ENCODE measurements at regions of chr18 and their contacts with region 1.

Region 1: DNA sequence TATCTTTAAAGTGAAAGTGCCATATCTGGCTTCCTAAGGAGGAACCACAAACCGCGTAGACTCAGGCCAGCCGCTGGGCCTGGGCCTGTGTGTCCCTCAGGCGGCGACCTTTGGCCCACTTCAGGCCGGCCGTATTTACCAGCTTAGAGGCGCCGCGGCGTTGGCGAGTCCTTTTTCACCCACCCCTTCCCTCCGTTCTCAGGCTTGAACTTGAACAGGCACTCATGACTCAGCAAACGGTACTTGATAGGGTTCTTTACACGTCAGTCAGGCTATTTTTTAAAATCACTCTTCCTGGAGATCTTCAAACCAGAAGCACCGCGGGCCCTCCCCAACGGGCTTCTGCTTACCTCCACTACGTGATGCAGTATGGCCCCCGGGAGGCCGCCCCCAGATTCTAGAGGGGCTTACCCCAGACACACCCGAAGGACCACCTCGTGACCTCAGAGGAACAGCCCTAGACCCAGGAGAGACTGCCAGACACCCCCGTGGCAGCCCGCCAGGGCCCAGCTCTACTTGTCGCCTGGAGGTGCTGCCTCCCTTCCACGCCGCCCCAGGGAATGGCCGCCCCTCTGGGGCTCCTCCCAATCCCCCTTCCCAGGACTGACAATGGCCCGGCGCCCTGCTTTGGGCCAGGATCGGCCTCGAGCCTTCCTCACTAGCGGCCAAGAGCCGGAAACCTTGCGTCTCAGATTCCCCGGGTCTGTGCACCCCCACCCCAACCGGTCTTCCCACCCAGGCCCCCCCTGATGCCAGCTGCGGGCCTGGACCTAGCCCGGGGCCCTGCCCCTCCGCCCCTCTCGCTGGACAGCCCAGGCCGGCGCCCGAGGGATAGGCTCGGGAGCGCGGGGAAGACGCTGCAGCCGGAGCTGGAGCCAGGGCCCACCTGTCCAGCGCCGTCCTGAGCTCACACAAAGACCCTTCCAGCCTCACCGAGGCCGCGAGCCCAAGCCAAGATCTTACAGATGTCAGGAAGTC is 33.8 kb upstream of the IMPA2 start:
- DNase-seq: peak; percentile 80 to 98
- H3K4me3 ChIP-seq: peak overlapping the region; percentile 64 to 66
- H3K27ac ChIP-seq: peak overlapping the region; percentile 84 to 99
- H3K4me1 ChIP-seq: peaks cover 3 to 14% of the 10 kb centered on the region in 2 donors
- H3K27me3 ChIP-seq: no peaks in the 10 kb centered on the region
- CTCF ChIP-seq: no peak

Region 2: DNA sequence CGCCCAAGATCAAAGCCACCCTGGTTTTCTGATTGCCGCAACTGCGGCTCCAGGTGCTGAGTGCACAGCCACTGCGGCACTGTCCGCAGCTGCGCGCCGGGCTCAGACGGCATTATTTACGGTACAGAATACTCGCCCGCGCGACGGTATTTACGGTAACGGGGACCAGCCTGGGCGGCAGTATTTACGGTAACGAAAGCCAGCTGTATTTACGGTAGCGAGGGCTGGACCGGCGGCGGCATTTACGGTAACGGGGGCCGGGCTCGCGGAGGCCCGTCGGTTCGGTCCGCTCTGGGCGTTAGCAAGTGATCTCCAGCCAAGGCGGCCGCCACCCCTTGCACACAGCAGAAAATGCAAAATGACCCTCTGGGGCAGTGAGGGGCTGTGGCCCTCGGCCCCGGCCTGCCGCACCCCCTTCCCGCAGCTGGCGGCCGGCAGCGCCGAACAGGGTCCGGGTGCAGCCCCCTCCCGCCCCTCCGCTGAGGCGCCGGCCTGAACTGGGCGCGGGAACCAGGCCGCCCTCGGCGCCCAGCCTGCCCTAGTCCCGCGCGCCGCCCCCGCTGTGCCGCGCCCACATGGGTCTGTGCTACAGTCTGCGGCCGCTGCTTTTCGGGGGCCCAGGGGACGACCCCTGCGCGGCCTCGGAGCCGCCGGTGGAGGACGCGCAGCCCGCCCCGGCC is 258.4 kb before region 1 on chr18 and contains the start of gene GNAL:
- intact Hi-C with region 1: loop called (anchors 1 kb)
- DNase-seq: peak in 1 of 2 donors; percentile 90
- H3K4me3 ChIP-seq: peak within 1 kb of the TSS; percentile 57 to 98
- H3K27ac ChIP-seq: peak within 1 kb of the TSS; percentile 72 to 89
- H3K4me1 ChIP-seq: peaks cover 0 to 3% of the 10 kb centered on the region in 2 donors
- H3K27me3 ChIP-seq: no peaks in the 10 kb centered on the region
- CTCF ChIP-seq: no peak
- total RNA-seq, gene GNAL: 5.9 TPM

Region 3: GRCh38 chr18:11908182-11909060 is 39.1 kb before region 1 on chr18 and contains the start of gene MPPE1:
- intact Hi-C with region 1: loop called (anchors 1 kb)
- DNase-seq: peak; percentile 49 to 95
- H3K4me3 ChIP-seq: peak within 1 kb of the TSS; percentile 77 to 94
- H3K27ac ChIP-seq: peak within 1 kb of the TSS; percentile 99 to 100
- H3K4me1 ChIP-seq: peaks cover 0 to 10% of the 10 kb centered on the region in 2 donors
- H3K27me3 ChIP-seq: no peaks in the 10 kb centered on the region
- CTCF ChIP-seq: no peak
- total RNA-seq, gene MPPE1: 18.9 TPM

Region 4: GRCh38 chr18:11980555-11981382 is 33.3 kb after region 1 on chr18:
- intact Hi-C with region 1: loop called (anchors 1 kb)
- DNase-seq: peak; percentile 95 to 99
- H3K4me3 ChIP-seq: peak overlapping the region; percentile 59 to 100
- H3K27ac ChIP-seq: peak overlapping the region; percentile 87 to 92
- H3K4me1 ChIP-seq: peaks cover 0 to 12% of the 10 kb centered on the region in 2 donors
- H3K27me3 ChIP-seq: no peaks in the 10 kb centered on the region
- CTCF ChIP-seq: peak in 1 of 3 experiments; percentile 32

Region 5: DNA sequence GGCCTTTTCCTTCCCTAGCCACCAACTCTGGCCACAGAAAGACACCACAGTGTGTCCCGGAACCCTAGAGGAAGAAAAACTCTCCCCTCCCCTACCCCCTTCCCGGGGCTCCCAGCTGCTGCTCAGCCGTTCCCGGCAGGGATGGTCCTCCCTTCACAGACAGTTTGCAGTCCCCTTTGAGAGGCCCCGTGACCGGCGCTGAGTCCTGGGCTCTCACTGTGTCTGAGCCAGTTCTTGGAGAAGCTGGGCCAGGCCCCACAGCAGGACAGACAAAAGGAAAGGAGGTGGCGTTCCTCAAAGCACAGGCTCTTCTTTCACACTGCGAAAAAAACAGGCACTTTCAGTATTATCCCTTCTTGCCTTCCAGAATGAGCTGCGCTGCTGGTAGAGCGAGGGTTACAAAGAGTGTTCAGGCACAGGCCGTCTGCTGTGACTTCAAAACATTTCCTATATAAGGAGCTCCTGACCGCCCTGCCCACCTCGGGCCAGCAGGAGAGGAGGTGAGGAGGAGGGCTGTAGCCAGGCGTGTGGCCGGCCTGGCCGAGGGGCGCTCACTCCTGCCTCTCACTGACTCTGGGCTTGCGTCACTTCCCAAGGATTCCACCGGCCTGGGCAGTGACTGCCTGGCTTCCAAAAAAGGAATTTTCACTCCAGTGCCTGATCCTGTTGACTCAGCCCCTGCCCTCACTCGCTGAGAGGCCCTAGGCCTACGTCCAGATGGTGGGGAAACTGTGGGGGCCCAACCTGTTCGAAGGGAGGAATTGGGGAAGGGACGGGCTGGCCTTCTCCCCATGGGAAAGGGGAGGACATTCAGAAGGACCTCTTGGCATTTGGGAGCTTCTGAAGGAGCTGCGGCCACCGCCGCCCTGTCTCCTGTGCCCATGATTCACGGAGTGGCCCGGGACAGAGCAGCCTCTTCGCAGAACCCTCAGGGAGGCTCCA is 331.5 kb after region 1 on chr18:
- intact Hi-C with region 1: loop called (anchors 5 kb)
- DNase-seq: peak; percentile 73 to 97
- H3K4me3 ChIP-seq: peak overlapping the region; percentile 38 to 66
- H3K27ac ChIP-seq: peak overlapping the region; percentile 95 to 99
- H3K4me1 ChIP-seq: peaks cover 3 to 21% of the 10 kb centered on the region in 2 donors
- H3K27me3 ChIP-seq: no peaks in the 10 kb centered on the region
- CTCF ChIP-seq: peak in 2 of 3 experiments; percentile 12 to 31